ENCODE measurements at regions of chr12 and their contacts with region 1.

Region 1: GRCh38 chr12:10364815-10365622 is 24.8 kb downstream of the KLRK1 start:
- DNase-seq: peak in 7 of 9 experiments; percentile 40 to 93 (median 70)
- ATAC-seq: peak; percentile 66
- H3K4me3 ChIP-seq: peak overlapping the region; percentile 60 to 77
- H3K4me3 Mint-ChIP-seq: no peak overlapping the region
- H3K27ac ChIP-seq: peak overlapping the region; percentile 71 to 86
- H3K27ac Mint-ChIP-seq: no peak overlapping the region
- H3K4me1 ChIP-seq: peaks cover 83% of the 10 kb centered on the region
- H3K4me1 Mint-ChIP-seq: peaks cover 36% of the 10 kb centered on the region
- H3K27me3 ChIP-seq: no peaks in the 10 kb centered on the region
- H3K27me3 Mint-ChIP-seq: no peaks in the 10 kb centered on the region
- CTCF ChIP-seq: no peak

Region 2: GRCh38 chr12:9869307-9870161 is 495.5 kb before region 1 on chr12 and contains the start of gene CLEC2B:
- CTCF ChIA-PET with region 1: no interaction called
- POLR2A ChIA-PET with region 1: no interaction called
- intact Hi-C with region 1: loop called in 1 of 2 experiments (anchors 5 kb)
- DNase-seq: peak in 3 of 9 experiments; percentile 50 to 86 (median 71)
- ATAC-seq: peak; percentile 70
- H3K4me3 ChIP-seq: peak within 1 kb of the TSS; percentile 41 to 64
- H3K4me3 Mint-ChIP-seq: peak within 1 kb of the TSS; percentile 89
- H3K27ac ChIP-seq: peak within 1 kb of the TSS; percentile 79 to 92
- H3K27ac Mint-ChIP-seq: peak within 1 kb of the TSS; percentile 96
- H3K4me1 ChIP-seq: peaks cover 7% of the 10 kb centered on the region
- H3K4me1 Mint-ChIP-seq: peaks cover 36% of the 10 kb centered on the region
- H3K27me3 ChIP-seq: no peaks in the 10 kb centered on the region
- H3K27me3 Mint-ChIP-seq: no peaks in the 10 kb centered on the region
- CTCF ChIP-seq: no peak
- total RNA-seq, gene CLEC2B: 141 to 145 TPM

Region 3: DNA sequence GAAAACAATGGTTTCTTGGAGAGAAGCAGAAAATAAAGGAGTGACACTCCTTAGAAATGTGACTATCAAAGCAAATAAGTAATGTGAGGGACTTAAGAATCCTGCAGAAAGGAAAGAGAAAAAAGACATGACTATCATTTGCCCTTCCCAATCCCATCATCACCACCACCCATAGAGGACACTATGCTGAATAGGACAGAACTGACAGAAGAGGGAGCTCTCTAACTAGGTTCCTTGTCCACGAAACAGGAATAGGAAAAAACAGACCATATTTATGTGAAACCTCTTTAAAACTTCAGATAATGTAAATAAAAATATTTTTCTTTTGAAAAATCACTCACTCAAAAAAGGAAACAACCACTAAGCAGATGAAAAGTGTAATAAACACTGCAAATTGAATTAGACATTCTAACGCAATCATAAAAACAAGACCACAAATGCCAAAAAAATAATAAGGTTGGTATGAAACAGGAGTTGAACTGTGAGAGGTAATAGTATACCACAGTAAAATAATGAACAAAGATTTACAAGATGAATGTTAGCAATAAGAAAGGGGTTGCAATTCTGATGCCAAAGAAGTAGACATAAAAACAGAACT is 33.3 kb before region 1 on chr12:
- CTCF ChIA-PET with region 1: interaction called, 5 read pairs
- POLR2A ChIA-PET with region 1: no interaction called
- intact Hi-C with region 1: loop called in 1 of 2 experiments (anchors 5 kb)
- DNase-seq: peak in 3 of 9 experiments; percentile 8 to 77 (median 63)
- ATAC-seq: no peak
- H3K4me3 ChIP-seq: no peak overlapping the region
- H3K4me3 Mint-ChIP-seq: peak overlapping the region; percentile 26
- H3K27ac ChIP-seq: no peak overlapping the region
- H3K27ac Mint-ChIP-seq: no peak overlapping the region
- H3K4me1 ChIP-seq: peaks cover 6% of the 10 kb centered on the region
- H3K4me1 Mint-ChIP-seq: peaks cover 10% of the 10 kb centered on the region
- H3K27me3 ChIP-seq: no peaks in the 10 kb centered on the region
- H3K27me3 Mint-ChIP-seq: no peaks in the 10 kb centered on the region
- CTCF ChIP-seq: peak; percentile 51

Region 4: GRCh38 chr12:10400829-10401228 is 35.8 kb after region 1 on chr12:
- CTCF ChIA-PET with region 1: interaction called, 3 read pairs
- POLR2A ChIA-PET with region 1: interaction called, 5 read pairs
- intact Hi-C with region 1: loop called (anchors 5 kb)
- DNase-seq: no peak
- ATAC-seq: no peak
- H3K4me3 ChIP-seq: peak overlapping the region in 1 of 2 experiments; percentile 45
- H3K4me3 Mint-ChIP-seq: peak overlapping the region; percentile 49
- H3K27ac ChIP-seq: no peak overlapping the region
- H3K27ac Mint-ChIP-seq: peak overlapping the region; percentile 16
- H3K4me1 ChIP-seq: peaks cover 54% of the 10 kb centered on the region
- H3K4me1 Mint-ChIP-seq: peaks cover 46% of the 10 kb centered on the region
- H3K27me3 ChIP-seq: no peaks in the 10 kb centered on the region
- H3K27me3 Mint-ChIP-seq: no peaks in the 10 kb centered on the region
- CTCF ChIP-seq: no peak

Region 5: GRCh38 chr12:10562306-10562933 is 197.4 kb after region 1 on chr12:
- CTCF ChIA-PET with region 1: interaction called, 17 read pairs
- POLR2A ChIA-PET with region 1: interaction called, 6 read pairs
- intact Hi-C with region 1: loop called (anchors 1 kb)
- DNase-seq: peak in 4 of 9 experiments; percentile 29 to 79 (median 62)
- ATAC-seq: no peak
- H3K4me3 ChIP-seq: no peak overlapping the region
- H3K4me3 Mint-ChIP-seq: peak overlapping the region; percentile 11
- H3K27ac ChIP-seq: no peak overlapping the region
- H3K27ac Mint-ChIP-seq: peak overlapping the region; percentile 80
- H3K4me1 ChIP-seq: peaks cover 70% of the 10 kb centered on the region
- H3K4me1 Mint-ChIP-seq: peaks cover 83% of the 10 kb centered on the region
- H3K27me3 ChIP-seq: no peaks in the 10 kb centered on the region
- H3K27me3 Mint-ChIP-seq: no peaks in the 10 kb centered on the region
- CTCF ChIP-seq: peak; percentile 98

Region 6: DNA sequence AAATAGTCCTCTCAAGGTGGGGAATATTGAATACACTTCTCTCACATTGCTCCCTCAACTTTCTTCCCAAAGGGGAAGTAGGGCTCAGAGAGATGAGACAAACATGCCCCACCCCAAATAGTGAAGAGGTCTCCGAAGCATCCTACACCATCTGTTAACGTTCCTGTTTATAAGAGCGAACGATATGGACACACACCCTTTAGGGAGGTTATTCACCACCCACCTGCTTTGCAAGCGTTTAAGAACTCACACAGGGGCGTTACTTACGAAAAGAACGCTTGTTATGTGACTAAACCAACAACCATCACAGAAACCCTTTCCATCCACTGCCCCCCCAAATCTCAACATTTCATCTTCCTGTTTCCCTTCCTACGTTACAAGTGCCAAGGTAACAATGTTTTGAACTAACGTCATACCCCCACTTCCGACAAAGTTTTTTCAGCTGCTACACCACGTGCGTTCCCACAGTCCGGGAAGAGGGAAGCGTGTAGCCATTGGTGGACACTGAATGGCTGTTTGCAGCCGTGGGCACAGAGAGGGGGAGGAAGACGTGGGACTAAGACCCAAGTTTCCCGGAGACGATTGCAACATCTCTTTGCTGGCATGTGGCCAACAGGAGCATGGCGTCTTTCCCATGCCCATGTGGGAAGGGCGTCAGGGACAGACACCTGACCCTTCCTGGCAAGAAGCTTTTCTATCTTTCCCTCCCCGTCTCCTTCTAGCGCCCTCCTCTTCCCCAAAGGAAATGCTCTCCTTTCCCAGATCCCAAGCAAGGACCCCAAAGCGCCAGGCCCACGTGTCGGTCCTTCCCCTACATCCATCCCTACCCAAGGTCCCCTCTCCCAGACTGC is 356.9 kb after region 1 on chr12:
- CTCF ChIA-PET with region 1: no interaction called
- POLR2A ChIA-PET with region 1: no interaction called
- intact Hi-C with region 1: loop called (anchors 5 kb)
- DNase-seq: peak; percentile 26 to 96 (median 63)
- ATAC-seq: peak; percentile 75
- H3K4me3 ChIP-seq: peak overlapping the region; percentile 69 to 72
- H3K4me3 Mint-ChIP-seq: peak overlapping the region; percentile 91
- H3K27ac ChIP-seq: peak overlapping the region; percentile 86 to 94
- H3K27ac Mint-ChIP-seq: peak overlapping the region; percentile 93
- H3K4me1 ChIP-seq: peaks cover 25% of the 10 kb centered on the region
- H3K4me1 Mint-ChIP-seq: peaks cover 50% of the 10 kb centered on the region
- H3K27me3 ChIP-seq: peaks cover 0 to 6% of the 10 kb centered on the region in 2 experiments
- H3K27me3 Mint-ChIP-seq: peaks cover 15% of the 10 kb centered on the region
- CTCF ChIP-seq: no peak